ENCODE measurements at regions of chr3 and their contacts with region 1.

Region 1: DNA sequence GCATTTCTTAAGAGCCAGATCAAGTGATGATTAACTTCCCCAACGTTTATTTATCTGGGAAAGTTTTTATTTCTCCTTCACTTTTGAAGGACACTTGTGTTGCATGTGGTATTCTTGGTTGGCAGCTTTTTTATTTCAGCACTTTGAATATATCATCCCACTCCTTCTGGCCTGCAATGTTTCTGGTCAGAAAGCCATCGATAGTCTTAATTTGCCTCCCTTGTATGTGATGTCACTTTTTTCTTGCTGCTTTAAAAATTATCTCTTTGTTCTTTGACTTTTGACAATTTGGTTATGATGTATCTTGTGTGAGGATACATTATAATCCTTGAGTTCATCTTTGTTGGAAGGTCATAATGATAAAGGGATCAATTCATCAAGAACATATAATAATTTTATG is 503.2 kb downstream of the OTOL1 start:
- DNase-seq: no peak
- H3K4me3 ChIP-seq: no peak overlapping the region
- H3K27ac ChIP-seq: no peak overlapping the region
- H3K4me1 ChIP-seq: no peaks in the 10 kb centered on the region
- H3K27me3 ChIP-seq: no peaks in the 10 kb centered on the region
- CTCF ChIP-seq: no peak
- POLR2A ChIP-seq: no peak

Region 2: DNA sequence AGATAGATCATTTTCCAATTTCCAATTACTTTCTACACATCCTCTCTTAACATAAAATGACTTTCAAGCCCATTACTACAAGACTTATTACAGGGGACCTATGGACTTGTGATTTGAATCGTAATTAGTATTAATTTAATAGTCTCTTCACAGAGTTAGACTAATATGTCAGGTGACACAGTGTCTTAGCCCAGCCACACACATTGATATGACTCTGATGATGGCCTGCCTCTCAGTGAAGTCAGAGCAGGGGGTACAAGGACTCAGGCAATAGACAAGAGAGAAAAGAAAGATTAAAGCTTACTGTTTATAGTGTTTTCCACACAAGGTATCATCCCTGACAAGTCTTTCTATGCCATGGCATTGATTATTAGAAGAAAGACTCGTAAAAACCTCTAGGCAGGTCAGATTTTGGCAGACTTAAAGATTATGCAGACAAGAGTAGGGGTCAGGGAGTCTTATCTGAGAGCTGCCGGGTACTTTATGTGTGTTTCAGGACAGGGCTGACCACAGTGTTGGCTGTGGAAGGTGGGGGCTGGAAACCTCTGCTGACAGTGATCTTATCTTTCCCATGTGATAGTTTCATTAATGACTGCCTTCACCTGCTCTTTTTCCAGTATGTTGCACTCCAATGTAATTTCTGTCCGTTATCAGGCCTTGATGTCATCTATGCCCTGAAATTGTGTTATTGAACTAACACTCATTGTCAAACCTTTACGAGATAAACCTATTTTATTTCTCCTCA is 944.8 kb before region 1 on chr3:
- intact Hi-C with region 1: loop called (anchors 5 kb)
- DNase-seq: no peak
- H3K4me3 ChIP-seq: no peak overlapping the region
- H3K27ac ChIP-seq: no peak overlapping the region
- H3K4me1 ChIP-seq: no peaks in the 10 kb centered on the region
- H3K27me3 ChIP-seq: no peaks in the 10 kb centered on the region
- CTCF ChIP-seq: no peak
- POLR2A ChIP-seq: no peak

Region 3: DNA sequence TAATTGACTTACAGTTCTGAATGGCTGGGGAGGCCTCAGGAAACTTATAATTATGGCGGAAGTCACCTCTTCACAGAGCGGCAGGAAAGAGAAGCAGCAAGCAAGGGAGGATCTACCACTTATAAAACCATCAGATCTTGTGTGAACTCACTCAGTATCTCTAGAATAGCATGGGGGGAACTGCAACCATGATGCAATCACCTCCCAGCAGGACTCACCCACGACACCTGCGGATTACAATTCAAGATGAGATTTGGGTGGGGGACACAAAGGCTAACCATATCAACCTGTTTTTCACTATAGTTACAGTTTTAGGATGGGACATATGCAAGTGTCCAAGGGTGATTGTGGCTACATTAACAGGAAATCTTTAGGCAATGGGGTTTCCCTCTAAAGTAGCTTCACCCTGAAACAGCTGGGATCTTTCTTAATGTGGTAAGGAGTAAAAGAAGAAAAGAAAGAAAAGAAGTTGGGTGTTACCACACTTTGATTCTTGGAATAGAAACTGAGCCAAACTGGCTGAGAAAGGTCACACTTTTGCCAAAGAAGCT is 49.5 kb before region 1 on chr3:
- intact Hi-C with region 1: no loop called
- DNase-seq: no peak
- H3K4me3 ChIP-seq: no peak overlapping the region
- H3K27ac ChIP-seq: no peak overlapping the region
- H3K4me1 ChIP-seq: no peaks in the 10 kb centered on the region
- H3K27me3 ChIP-seq: no peaks in the 10 kb centered on the region
- CTCF ChIP-seq: no peak
- POLR2A ChIP-seq: no peak

Measured in vagina (tissue), 2 donors.